ENCODE measurements at regions of chr5 and their contacts with region 1.

Region 1: GRCh38 chr5:118791926-118792734 is 196.2 kb downstream of the DTWD2 start:
- DNase-seq: peak; percentile 54
- ATAC-seq: peak; percentile 95
- H3K4me3 ChIP-seq: no peak overlapping the region
- H3K27ac ChIP-seq: no peak overlapping the region
- H3K4me1 ChIP-seq: no peaks in the 10 kb centered on the region
- H3K27me3 ChIP-seq: no peaks in the 10 kb centered on the region; a peak in 1 of 5 replicates
- CTCF ChIP-seq: peak; percentile 74
- EP300 ChIP-seq: no peak
- POLR2A ChIP-seq: no peak
- RAD21 ChIP-seq: no peak

Region 2: GRCh38 chr5:117454716-117455596 is 1337.2 kb before region 1 on chr5:
- CTCF ChIA-PET with region 1: no interaction called
- POLR2A ChIA-PET with region 1: no interaction called
- in situ Hi-C with region 1: no loop called
- intact Hi-C with region 1: loop called (anchors 2 kb)
- DNase-seq: peak; percentile 50
- ATAC-seq: peak; percentile 87
- H3K4me3 ChIP-seq: peak overlapping the region; percentile 51 to 62 (median 53)
- H3K27ac ChIP-seq: no peak overlapping the region
- H3K4me1 ChIP-seq: peaks cover 11% of the 10 kb centered on the region; the same call in 1 of the 2 replicates
- H3K27me3 ChIP-seq: no peaks in the 10 kb centered on the region
- CTCF ChIP-seq: peak; percentile 86
- EP300 ChIP-seq: no peak
- POLR2A ChIP-seq: no peak
- RAD21 ChIP-seq: no peak; the same call in 1 of the 2 replicates

Region 3: DNA sequence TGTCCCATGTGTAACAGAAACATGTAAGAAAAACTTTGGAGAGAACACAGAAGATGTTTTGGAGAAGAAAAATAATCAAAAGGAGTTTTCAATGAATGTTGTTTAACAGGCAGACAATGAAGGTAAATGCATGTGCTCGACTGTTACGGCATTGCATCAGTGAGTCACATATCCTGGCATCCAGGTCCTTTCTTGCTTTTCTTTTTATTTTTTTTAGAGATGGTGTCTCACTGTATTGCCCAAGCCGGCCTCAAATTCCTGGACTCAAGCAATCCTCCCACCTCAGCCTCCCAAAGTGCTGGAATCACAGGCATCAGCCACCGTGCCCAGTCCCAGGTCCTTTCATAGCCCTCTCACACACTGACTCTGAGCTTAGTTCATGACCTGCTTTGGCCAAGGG is 14.4 kb after region 1 on chr5:
- CTCF ChIA-PET with region 1: no interaction called
- POLR2A ChIA-PET with region 1: no interaction called
- in situ Hi-C with region 1: no loop called
- intact Hi-C with region 1: no loop called
- DNase-seq: no peak
- ATAC-seq: no peak
- H3K4me3 ChIP-seq: no peak overlapping the region
- H3K27ac ChIP-seq: no peak overlapping the region
- H3K4me1 ChIP-seq: no peaks in the 10 kb centered on the region
- H3K27me3 ChIP-seq: no peaks in the 10 kb centered on the region
- CTCF ChIP-seq: no peak
- EP300 ChIP-seq: no peak
- POLR2A ChIP-seq: no peak
- RAD21 ChIP-seq: no peak

Region 4: GRCh38 chr5:118956727-118957126 is 164.6 kb after region 1 on chr5:
- CTCF ChIA-PET with region 1: no interaction called
- POLR2A ChIA-PET with region 1: no interaction called
- in situ Hi-C with region 1: no loop called
- intact Hi-C with region 1: loop called (anchors 2 kb)
- DNase-seq: no peak
- ATAC-seq: no peak
- H3K4me3 ChIP-seq: no peak overlapping the region
- H3K27ac ChIP-seq: no peak overlapping the region
- H3K4me1 ChIP-seq: no peaks in the 10 kb centered on the region
- H3K27me3 ChIP-seq: no peaks in the 10 kb centered on the region
- CTCF ChIP-seq: peak; percentile 44
- EP300 ChIP-seq: no peak
- POLR2A ChIP-seq: no peak
- RAD21 ChIP-seq: no peak